ENCODE measurements at regions of chr2 and their contacts with region 1.

Region 1: DNA sequence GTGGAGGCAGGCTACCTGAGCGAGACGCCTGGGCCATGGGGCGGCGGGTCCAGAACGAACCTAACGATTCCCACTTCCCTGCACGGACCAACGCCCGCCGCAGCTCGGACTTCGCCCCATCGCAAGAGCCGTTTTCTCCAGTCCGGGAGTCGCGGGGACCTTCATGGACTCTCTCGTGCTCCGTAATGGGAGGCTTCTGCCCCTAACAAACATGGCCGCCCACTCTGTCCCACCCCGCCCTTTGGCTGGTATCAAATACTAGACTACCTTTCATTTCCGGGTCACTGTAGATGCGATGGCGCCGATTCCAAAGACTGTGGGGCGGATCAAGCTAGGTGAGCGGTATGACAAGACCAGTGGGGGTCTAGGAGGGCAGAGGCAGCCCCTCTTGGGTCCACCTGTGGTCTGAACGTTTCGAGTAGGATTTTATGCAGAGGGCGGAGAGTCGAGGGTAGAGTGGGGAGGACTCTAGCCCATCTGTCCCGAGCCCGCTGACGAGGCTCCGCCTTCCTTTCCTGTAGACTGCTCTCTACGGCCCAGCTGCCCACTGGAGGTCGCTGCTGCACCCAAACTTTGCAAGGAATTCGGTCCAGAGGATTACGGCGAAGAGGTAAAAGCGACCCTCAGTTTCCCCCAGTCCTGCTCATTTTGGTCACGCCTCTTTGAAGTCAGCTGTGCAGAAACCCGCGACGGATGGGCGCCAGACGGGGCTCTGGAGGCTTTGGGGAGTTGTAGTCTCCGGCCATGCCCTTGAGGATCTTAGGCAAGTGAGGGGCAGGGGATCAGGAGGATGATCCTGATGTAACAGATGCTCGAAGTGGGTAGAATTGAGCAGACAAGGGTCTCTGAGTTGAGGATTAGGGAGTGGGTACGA is at the starts of genes CCDC142 and TTC31:
- DNase-seq: peak; percentile 98
- H3K4me3 ChIP-seq: peak within 1 kb of the TSS; percentile 87 to 90
- H3K27ac ChIP-seq: peak within 1 kb of the TSS; percentile 85 to 93
- H3K4me1 ChIP-seq: peaks cover 20% of the 10 kb centered on the region
- H3K27me3 ChIP-seq: no peaks in the 10 kb centered on the region
- CTCF ChIP-seq: peak; percentile 69 to 88 (median 71)
- POLR2A ChIP-seq: no peak
- total RNA-seq, gene CCDC142: 29.4 to 30.2 TPM
- total RNA-seq, gene TTC31: 30.1 to 36.2 TPM

Region 2: DNA sequence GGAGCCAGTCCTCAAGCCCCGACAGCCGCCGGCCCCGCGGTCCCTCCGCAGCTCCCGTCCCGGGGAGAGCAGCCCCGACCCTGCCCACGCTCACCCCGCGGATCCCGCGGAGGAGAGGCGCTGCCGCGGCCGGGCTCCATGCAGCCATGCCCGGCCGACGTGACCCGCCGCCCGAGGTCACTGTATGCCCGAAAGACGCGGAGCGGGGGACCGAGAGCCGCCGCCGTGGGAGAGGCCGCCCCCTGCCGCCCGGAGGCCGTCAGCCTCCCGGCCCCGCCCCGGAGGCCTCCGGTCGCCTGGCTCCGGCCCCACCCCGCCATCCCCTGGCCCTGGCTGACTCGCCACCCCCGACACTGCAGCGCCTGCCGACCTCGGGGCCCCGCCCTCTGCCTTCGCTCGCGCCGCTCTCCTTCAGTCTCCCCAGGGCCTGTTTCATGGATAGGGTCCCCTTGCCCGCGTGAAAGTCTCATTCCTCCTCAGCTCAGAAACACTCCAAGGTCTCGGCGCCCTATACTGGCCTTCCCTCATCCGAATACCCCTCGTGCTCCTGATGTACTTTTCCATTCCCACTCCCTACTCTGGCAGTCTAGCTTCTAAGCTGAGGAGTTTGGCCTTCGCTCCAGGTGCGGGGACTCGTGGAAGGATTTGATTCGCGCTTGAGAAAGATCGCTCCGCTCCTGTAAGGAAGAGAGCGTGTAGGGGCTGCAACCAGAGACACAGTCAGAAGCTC is 335.1 kb before region 1 on chr2 and contains the start of gene BOLA3:
- intact Hi-C with region 1: no loop called
- DNase-seq: peak; percentile 87
- H3K4me3 ChIP-seq: peak within 1 kb of the TSS; percentile 74 to 85
- H3K27ac ChIP-seq: peak within 1 kb of the TSS; percentile 67 to 80
- H3K4me1 ChIP-seq: peaks cover 12% of the 10 kb centered on the region
- H3K27me3 ChIP-seq: no peaks in the 10 kb centered on the region
- CTCF ChIP-seq: peak; percentile 53 to 68 (median 53)
- POLR2A ChIP-seq: no peak
- total RNA-seq, gene BOLA3: 40.2 to 56.2 TPM

Region 3: DNA sequence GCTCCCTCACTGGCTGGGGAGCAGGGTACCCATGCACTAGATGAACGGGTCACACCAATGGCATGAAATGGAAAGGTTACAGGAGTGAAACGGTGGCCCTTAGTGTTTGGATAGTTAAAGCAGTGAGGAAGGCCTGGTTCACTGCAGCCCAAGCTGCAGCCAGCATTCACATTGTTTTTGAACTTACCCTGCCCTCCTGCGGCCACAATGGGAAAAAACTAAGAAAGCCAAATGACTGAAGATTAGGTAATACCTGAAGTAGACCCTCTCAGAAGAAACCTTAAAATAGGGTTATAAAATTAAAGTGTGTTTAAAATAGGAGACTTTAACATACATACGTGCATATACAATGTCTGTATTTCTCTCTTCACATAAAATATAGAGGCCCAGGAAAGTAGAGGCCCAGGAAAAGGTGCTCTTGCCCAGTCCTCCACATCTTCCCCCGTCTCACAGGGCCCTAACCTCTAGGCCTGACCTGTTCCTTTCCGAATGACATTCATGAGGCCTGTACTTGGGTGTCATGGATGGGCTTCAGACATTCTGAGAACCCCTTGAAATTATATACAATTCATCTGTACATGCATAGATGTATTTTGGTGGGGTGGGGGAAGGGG is 104.7 kb after region 1 on chr2:
- intact Hi-C with region 1: loop called (anchors 10 kb)
- DNase-seq: peak; percentile 72
- H3K4me3 ChIP-seq: no peak overlapping the region
- H3K27ac ChIP-seq: no peak overlapping the region
- H3K4me1 ChIP-seq: no peaks in the 10 kb centered on the region
- H3K27me3 ChIP-seq: no peaks in the 10 kb centered on the region
- CTCF ChIP-seq: peak; percentile 44 to 56 (median 53)
- POLR2A ChIP-seq: no peak

Measured in testis (tissue), 5 donors.